GM10248 (cell line): ENCODE measurements at regions of chr5 and their contacts with region 1.

Region 1: GRCh38 chr5:151651997-151652645 is 34.6 kb downstream of the SPARC start:
- DNase-seq: peak; percentile 83
- CTCF ChIP-seq: peak; percentile 90

Region 2: GRCh38 chr5:151456321-151456940 is 195.7 kb before region 1 on chr5:
- CTCF ChIA-PET with region 1: interaction called, 16 read pairs
- POLR2A ChIA-PET with region 1: no interaction called
- DNase-seq: no peak
- CTCF ChIP-seq: no peak

Region 3: DNA sequence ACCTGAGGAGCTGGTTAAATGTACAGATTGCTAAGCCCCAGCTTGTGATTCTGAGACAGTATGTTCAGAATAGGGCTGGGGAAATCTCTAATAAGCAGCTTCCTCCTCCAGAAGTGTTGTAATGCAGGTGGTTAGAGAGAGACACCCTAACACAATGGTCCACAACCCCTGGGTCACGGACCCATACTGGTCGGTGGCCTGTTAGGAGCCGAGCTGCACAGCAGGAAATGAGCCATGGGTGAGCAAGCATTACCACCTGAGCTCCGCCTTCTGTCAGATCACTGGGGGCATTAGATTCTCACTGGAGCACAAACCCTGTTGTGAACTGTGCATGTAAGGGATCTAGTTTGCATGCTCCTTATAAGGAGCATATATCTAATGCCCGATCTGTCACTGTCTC is 142.9 kb before region 1 on chr5:
- CTCF ChIA-PET with region 1: interaction called, 15 read pairs
- POLR2A ChIA-PET with region 1: no interaction called
- DNase-seq: no peak
- CTCF ChIP-seq: no peak

Region 4: DNA sequence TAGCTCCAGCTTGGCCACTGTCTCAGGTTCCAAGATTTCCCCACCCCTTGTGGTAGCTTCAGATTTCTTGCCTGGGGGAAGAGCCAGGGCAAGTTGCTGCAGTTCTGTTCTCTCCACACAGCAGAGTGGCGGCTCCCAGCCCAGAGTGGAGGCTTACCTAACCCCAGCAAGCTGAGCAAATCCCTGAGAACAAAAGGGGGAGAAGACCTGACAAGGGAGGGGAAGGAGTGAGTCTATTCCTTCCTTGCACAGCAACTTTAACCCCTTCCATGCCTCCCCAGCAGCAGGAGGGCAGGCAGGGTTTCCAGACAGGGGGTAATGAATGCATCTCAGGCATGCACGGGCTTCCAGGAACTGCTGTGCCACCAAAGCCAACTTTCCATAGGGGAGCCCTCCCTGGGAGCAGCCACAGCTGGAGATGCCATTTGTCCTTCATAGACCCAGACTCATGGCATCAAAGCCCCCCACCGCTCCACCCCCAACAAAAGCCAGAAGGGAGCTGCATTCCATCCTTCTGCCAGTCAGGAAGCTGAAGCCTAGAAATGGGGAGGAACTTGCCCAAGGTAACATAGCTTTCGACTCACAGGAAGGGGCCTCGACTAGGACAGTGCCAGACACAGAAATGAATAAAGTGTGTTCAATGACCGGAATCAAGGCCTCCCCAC is 32.2 kb before region 1 on chr5:
- CTCF ChIA-PET with region 1: interaction called, 37 read pairs
- POLR2A ChIA-PET with region 1: no interaction called
- DNase-seq: no peak
- CTCF ChIP-seq: no peak

Region 5: GRCh38 chr5:151680944-151681427 is 28.9 kb after region 1 on chr5:
- CTCF ChIA-PET with region 1: interaction called, 72 read pairs
- POLR2A ChIA-PET with region 1: no interaction called
- DNase-seq: no peak
- CTCF ChIP-seq: no peak

Region 6: DNA sequence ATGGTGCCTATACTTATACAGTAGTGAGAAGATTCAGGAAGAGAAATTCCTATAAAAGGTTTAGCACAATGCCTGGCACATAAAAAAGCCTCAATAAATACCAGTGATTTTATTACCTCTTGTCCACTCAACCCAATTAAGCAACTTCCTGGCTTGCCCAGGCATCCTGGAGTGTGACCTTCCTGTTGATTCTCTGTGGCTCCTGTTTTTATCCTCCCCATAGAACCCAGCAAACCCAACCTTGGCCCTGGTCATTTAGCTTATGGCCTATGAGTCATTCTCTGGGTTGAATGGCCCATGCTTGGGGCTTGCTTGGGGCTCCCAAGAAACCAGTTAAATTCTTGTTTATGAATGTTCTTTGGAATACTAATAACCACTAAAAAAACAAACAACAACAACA is 56.0 kb after region 1 on chr5:
- CTCF ChIA-PET with region 1: interaction called, 11 read pairs
- POLR2A ChIA-PET with region 1: no interaction called
- DNase-seq: no peak
- CTCF ChIP-seq: no peak

Region 7: GRCh38 chr5:151751091-151751490 is 99.0 kb after region 1 on chr5:
- CTCF ChIA-PET with region 1: interaction called, 363 read pairs
- POLR2A ChIA-PET with region 1: no interaction called
- DNase-seq: no peak
- CTCF ChIP-seq: no peak

Region 8: GRCh38 chr5:151799407-151799806 is 147.3 kb after region 1 on chr5:
- CTCF ChIA-PET with region 1: no interaction called
- POLR2A ChIA-PET with region 1: no interaction called
- DNase-seq: no peak
- CTCF ChIP-seq: no peak

Region 9: GRCh38 chr5:152113401-152113800 is 461.3 kb after region 1 on chr5:
- CTCF ChIA-PET with region 1: no interaction called
- POLR2A ChIA-PET with region 1: no interaction called
- DNase-seq: no peak
- CTCF ChIP-seq: no peak